ENCODE measurements at regions of chr14 and their contacts with region 1.

Region 1: DNA sequence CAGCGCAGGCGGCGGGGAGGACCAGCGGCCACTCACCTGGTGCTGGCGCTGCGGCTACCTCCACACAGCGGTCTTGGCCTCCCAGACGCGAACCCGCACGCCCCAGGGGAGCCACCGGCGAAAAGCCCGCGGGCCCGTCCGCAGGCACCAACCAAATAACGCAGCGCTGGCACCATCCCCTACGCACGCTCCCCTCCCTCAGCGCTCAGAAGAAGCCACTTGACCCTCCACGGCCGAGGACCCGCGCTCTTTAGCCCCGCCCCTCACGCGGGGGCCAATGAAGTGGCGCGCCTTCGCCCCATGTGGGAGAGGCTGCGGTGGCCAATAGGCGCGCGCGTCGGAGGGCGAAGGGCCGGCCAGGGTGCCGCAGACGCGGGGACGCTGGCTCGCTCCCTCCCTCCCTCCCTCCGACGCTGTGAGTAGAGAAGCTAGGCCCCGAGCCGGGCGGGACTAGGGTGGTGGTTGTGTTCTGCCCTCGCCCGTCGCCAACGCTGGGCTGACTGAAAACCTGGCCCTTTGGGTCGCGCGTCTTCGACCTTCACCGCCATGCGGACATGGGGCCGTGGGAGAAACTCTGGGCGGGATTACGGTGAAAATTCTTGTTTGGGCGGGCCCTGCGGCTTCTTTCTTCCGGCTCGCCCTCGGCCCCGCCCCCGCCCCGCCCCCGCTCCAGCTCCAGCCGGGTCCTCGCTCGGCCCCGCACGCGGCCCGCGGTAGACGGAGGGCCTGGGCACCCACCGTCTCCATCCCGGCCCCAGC is at the starts of genes DMAC2L and L2HGDH:
- DNase-seq: peak; percentile 72 to 94 (median 84)
- ATAC-seq: peak; percentile 85
- H3K4me3 ChIP-seq: peak within 1 kb of the TSS; percentile 90
- H3K4me3 Mint-ChIP-seq: peak within 1 kb of the TSS; percentile 97
- H3K27ac ChIP-seq: peak within 1 kb of the TSS; percentile 85 to 90
- H3K27ac Mint-ChIP-seq: peak within 1 kb of the TSS; percentile 98
- H3K4me1 ChIP-seq: peaks cover 23% of the 10 kb centered on the region
- H3K4me1 Mint-ChIP-seq: peaks cover 57% of the 10 kb centered on the region
- H3K27me3 ChIP-seq: no peaks in the 10 kb centered on the region
- H3K27me3 Mint-ChIP-seq: no peaks in the 10 kb centered on the region
- CTCF ChIP-seq: no peak
- total RNA-seq, gene DMAC2L: 10.8 to 13.4 TPM
- total RNA-seq, gene L2HGDH: 1.7 to 3.1 TPM

Region 2: DNA sequence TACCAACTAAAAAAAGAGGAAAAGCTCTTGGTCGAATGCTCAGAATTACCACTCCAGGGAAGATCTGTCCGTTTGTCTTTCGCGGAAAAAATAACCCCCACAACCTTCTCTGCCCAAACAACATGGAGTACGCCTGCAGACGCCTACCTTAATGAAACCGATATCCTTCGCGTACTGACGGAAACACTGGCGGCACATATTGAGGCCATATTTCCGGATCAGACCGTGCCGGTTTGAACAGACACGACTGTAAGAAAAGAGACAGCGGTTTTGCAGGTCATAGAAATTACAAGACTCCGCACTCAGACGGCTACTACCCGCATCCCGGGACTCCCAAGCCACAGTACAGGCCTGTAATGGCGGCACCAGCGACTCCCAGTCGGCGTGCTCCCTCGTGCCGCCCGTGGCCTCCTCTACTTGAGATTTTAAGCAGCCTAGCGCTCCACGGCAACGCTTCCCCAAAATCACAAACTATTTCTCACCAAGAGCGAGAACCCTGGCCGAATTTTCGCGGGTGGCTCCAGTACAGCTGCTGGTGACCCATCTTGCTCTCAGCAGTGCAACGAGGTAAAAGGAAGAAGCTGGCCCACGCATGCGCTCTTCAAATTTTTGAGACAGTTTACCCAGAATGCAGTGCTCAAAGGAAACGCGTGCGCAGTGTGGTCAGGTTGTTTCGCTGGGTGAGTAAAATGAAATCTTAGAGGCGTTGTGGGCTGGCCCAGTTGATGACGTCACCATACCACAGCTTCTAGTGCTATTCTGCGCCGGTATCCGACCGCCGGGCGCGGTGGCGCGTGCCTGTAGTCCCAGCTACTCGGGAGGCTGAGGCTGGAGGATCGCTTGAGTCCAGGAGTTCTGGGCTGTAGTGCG is 726.1 kb before region 1 on chr14 and contains the start of gene RPS29:
- CTCF ChIA-PET with region 1: no interaction called
- POLR2A ChIA-PET with region 1: interaction called, 10 read pairs
- intact Hi-C with region 1: loop called in 1 of 2 experiments (anchors 10 kb)
- DNase-seq: peak; percentile 95 to 100 (median 98)
- ATAC-seq: peak; percentile 77
- H3K4me3 ChIP-seq: peak within 1 kb of the TSS; percentile 89
- H3K4me3 Mint-ChIP-seq: peak within 1 kb of the TSS; percentile 90
- H3K27ac ChIP-seq: peak within 1 kb of the TSS; percentile 93 to 95
- H3K27ac Mint-ChIP-seq: peak within 1 kb of the TSS; percentile 99
- H3K4me1 ChIP-seq: peaks cover 33% of the 10 kb centered on the region
- H3K4me1 Mint-ChIP-seq: peaks cover 52% of the 10 kb centered on the region
- H3K27me3 ChIP-seq: no peaks in the 10 kb centered on the region
- H3K27me3 Mint-ChIP-seq: peaks cover 10% of the 10 kb centered on the region
- CTCF ChIP-seq: no peak
- total RNA-seq, gene RPS29: 3,356 to 3,996 TPM

Region 3: DNA sequence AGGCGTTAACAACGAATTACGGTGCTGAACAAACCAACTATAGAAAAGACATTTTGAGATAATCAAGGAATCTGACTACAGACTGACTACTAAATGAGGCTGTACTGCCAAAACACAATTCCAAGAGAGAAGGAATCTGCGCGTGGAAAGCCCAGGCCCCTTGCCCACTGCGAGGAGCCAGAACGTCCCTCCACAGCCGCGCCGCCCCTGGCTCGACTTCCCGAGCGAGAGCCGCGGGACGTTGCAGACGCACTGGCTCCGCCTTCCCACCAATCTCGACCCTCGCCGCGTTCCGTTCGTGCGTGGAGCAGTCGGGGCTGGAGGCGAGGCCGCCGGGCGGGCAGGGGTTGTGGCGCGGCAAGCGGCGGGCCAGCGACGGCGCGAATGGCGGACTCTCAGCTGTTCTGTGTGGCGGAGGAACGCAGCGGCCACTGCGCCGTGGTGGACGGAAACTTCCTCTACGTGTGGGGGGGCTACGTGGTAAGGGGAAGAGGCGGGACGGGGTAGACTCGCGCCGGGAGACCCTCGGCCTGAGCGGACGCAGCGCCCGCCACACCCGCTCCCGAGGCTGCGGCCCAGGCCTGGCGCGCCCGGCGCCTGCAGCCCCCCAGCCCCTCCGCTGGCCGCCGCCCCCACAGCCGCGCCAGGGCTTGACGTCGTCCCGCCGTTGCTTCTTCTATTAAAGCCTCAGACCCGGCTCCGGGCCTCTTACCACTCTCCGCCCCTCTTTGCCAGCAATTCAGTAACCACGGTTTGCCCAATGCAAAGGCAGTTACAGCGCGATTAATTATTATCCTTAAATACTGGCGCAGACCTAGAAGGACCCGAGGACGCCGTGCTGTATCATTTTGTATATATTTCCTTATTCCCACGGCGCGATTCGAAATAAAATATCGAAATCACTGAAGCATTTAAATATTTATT is 619.1 kb before region 1 on chr14 and contains the start of gene KLHDC1:
- CTCF ChIA-PET with region 1: no interaction called
- POLR2A ChIA-PET with region 1: no interaction called
- intact Hi-C with region 1: loop called in 1 of 2 experiments (anchors 5 kb)
- DNase-seq: peak; percentile 66 to 90 (median 78)
- ATAC-seq: peak; percentile 85
- H3K4me3 ChIP-seq: peak within 1 kb of the TSS; percentile 69
- H3K4me3 Mint-ChIP-seq: peak within 1 kb of the TSS; percentile 97
- H3K27ac ChIP-seq: peak within 1 kb of the TSS; percentile 60 to 70
- H3K27ac Mint-ChIP-seq: peak within 1 kb of the TSS; percentile 88
- H3K4me1 ChIP-seq: peaks cover 10% of the 10 kb centered on the region
- H3K4me1 Mint-ChIP-seq: peaks cover 50% of the 10 kb centered on the region
- H3K27me3 ChIP-seq: no peaks in the 10 kb centered on the region
- H3K27me3 Mint-ChIP-seq: no peaks in the 10 kb centered on the region
- CTCF ChIP-seq: no peak
- total RNA-seq, gene KLHDC1: 9.8 to 11.8 TPM

Region 4: GRCh38 chr14:50231475-50232275 is 80.5 kb before region 1 on chr14 and contains the start of gene SOS2:
- CTCF ChIA-PET with region 1: interaction called, 3 read pairs
- POLR2A ChIA-PET with region 1: interaction called, 10 read pairs
- intact Hi-C with region 1: loop called in 1 of 2 experiments (anchors 2 kb)
- DNase-seq: peak; percentile 66 to 91 (median 81)
- ATAC-seq: peak; percentile 80
- H3K4me3 ChIP-seq: peak within 1 kb of the TSS; percentile 85
- H3K4me3 Mint-ChIP-seq: peak within 1 kb of the TSS; percentile 91
- H3K27ac ChIP-seq: peak within 1 kb of the TSS; percentile 83 to 86
- H3K27ac Mint-ChIP-seq: peak within 1 kb of the TSS; percentile 92
- H3K4me1 ChIP-seq: peaks cover 24% of the 10 kb centered on the region
- H3K4me1 Mint-ChIP-seq: peaks cover 57% of the 10 kb centered on the region
- H3K27me3 ChIP-seq: no peaks in the 10 kb centered on the region
- H3K27me3 Mint-ChIP-seq: no peaks in the 10 kb centered on the region
- CTCF ChIP-seq: no peak
- total RNA-seq, gene SOS2: 53.8 to 56.7 TPM

Region 5: GRCh38 chr14:50532502-50533240 is 220.5 kb after region 1 on chr14 and contains the start of gene MAP4K5:
- CTCF ChIA-PET with region 1: no interaction called
- POLR2A ChIA-PET with region 1: no interaction called
- intact Hi-C with region 1: loop called in 1 of 2 experiments (anchors 2 kb)
- DNase-seq: peak; percentile 77 to 95 (median 86)
- ATAC-seq: peak; percentile 92
- H3K4me3 ChIP-seq: peak within 1 kb of the TSS; percentile 87
- H3K4me3 Mint-ChIP-seq: peak within 1 kb of the TSS; percentile 95
- H3K27ac ChIP-seq: peak within 1 kb of the TSS; percentile 53 to 57
- H3K27ac Mint-ChIP-seq: peak within 1 kb of the TSS; percentile 86
- H3K4me1 ChIP-seq: peaks cover 23% of the 10 kb centered on the region
- H3K4me1 Mint-ChIP-seq: peaks cover 55% of the 10 kb centered on the region
- H3K27me3 ChIP-seq: no peaks in the 10 kb centered on the region
- H3K27me3 Mint-ChIP-seq: no peaks in the 10 kb centered on the region
- CTCF ChIP-seq: peak; percentile 66
- total RNA-seq, gene MAP4K5: 32.4 to 34.5 TPM

Measured in CD4-positive, alpha-beta T cell (primary cell).